Psoas muscle (tissue), 8 donors: ENCODE measurements at regions of chr11 and their contacts with region 1.

Region 1: GRCh38 chr11:96014217-96014616 is 90.3 kb upstream of the MTMR2 start:
- DNase-seq: no peak
- ATAC-seq: no peak
- H3K4me3 ChIP-seq: no peak overlapping the region
- H3K27ac ChIP-seq: no peak overlapping the region
- H3K4me1 ChIP-seq: peaks cover 4% of the 10 kb centered on the region
- H3K27me3 ChIP-seq: no peaks in the 10 kb centered on the region
- CTCF ChIP-seq: no peak

Region 2: DNA sequence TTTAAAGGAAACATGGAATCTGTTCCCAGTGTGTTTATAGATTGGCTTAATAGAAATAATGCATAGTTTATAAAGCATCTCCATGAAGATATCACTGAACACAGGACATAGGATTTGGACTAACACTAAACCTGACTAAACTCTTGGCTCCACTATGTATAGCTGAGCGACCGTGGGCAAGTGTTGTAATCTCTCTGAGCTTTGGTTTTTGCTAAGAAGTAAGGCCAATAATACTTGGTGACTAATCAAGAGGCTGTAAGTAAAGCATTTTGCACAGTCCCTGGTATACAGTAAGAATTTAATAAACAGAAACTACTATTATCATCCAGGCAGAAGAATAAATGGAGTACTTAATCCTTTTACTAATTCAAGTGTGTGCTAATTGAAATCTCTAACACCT is 35.2 kb after region 1 on chr11:
- intact Hi-C with region 1: loop called in 1 of 2 experiments (anchors 2 kb)
- DNase-seq: no peak
- ATAC-seq: no peak
- H3K4me3 ChIP-seq: no peak overlapping the region
- H3K27ac ChIP-seq: no peak overlapping the region
- H3K4me1 ChIP-seq: no peaks in the 10 kb centered on the region
- H3K27me3 ChIP-seq: no peaks in the 10 kb centered on the region
- CTCF ChIP-seq: no peak

Region 3: DNA sequence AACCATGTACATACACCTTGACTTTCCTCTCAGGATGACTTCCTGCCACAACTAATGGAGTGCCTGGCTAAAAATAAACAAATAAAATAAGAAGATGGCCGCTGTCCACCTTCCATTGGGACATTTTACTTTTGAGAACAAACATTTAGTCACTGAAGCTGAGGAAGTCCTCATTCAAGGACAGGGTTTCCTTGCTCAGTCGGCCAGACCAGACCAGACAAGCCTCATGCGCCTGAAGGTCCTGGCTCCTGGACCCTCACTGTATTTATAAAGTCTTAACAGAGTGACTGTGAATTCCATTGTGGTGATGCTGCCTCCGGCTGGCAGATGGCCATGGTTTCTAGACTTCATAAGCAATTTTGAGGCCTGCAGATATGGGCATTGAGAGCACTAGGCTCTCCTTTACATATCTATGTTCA is 214.3 kb after region 1 on chr11:
- intact Hi-C with region 1: no loop called
- DNase-seq: peak; percentile 64 to 65
- ATAC-seq: peak in 1 of 4 donors; percentile 37
- H3K4me3 ChIP-seq: no peak overlapping the region
- H3K27ac ChIP-seq: peak overlapping the region; percentile 48
- H3K4me1 ChIP-seq: no peaks in the 10 kb centered on the region
- H3K27me3 ChIP-seq: no peaks in the 10 kb centered on the region
- CTCF ChIP-seq: no peak